ENCODE measurements at regions of chr6 and their contacts with region 1.

Region 1: GRCh38 chr6:52317841-52318581 is 33.5 kb upstream of the MCM3 start:
- DNase-seq: no peak
- ATAC-seq: no peak
- H3K4me3 ChIP-seq: no peak overlapping the region
- H3K4me3 Mint-ChIP-seq: no peak overlapping the region
- H3K27ac ChIP-seq: no peak overlapping the region
- H3K27ac Mint-ChIP-seq: no peak overlapping the region
- H3K4me1 ChIP-seq: peaks cover 8% of the 10 kb centered on the region
- H3K4me1 Mint-ChIP-seq: peaks cover 21% of the 10 kb centered on the region
- H3K27me3 ChIP-seq: no peaks in the 10 kb centered on the region
- H3K27me3 Mint-ChIP-seq: no peaks in the 10 kb centered on the region
- CTCF ChIP-seq: no peak

Region 2: DNA sequence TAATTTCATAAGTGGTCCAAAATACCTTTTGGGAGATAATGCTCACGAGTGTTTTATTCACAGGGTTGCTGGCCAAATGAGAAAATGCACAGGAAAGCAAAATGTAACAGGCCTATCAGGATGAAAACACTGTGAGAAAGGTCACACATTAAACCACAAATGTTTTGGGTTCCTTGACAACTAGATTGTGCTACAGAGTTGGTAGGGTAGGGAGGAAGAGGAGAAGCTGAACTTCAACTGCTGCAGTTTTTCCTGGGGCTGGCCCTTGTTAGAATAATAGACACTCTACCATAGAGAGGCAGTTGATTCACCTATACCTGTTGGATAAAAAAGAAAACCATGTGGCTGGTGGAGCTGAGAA is 15.8 kb after region 1 on chr6:
- CTCF ChIA-PET with region 1: interaction called, 4 read pairs
- POLR2A ChIA-PET with region 1: interaction called, 3 read pairs
- intact Hi-C with region 1: loop called in 1 of 2 experiments (anchors 2 kb)
- DNase-seq: peak in 5 of 9 experiments; percentile 1 to 78 (median 23)
- ATAC-seq: peak; percentile 76
- H3K4me3 ChIP-seq: no peak overlapping the region
- H3K4me3 Mint-ChIP-seq: peak overlapping the region; percentile 69
- H3K27ac ChIP-seq: peak overlapping the region; percentile 56 to 85
- H3K27ac Mint-ChIP-seq: peak overlapping the region; percentile 94
- H3K4me1 ChIP-seq: peaks cover 66% of the 10 kb centered on the region
- H3K4me1 Mint-ChIP-seq: peaks cover 68% of the 10 kb centered on the region
- H3K27me3 ChIP-seq: no peaks in the 10 kb centered on the region
- H3K27me3 Mint-ChIP-seq: no peaks in the 10 kb centered on the region
- CTCF ChIP-seq: no peak